ENCODE measurements at regions of chr2 and their contacts with region 1.

Region 1: DNA sequence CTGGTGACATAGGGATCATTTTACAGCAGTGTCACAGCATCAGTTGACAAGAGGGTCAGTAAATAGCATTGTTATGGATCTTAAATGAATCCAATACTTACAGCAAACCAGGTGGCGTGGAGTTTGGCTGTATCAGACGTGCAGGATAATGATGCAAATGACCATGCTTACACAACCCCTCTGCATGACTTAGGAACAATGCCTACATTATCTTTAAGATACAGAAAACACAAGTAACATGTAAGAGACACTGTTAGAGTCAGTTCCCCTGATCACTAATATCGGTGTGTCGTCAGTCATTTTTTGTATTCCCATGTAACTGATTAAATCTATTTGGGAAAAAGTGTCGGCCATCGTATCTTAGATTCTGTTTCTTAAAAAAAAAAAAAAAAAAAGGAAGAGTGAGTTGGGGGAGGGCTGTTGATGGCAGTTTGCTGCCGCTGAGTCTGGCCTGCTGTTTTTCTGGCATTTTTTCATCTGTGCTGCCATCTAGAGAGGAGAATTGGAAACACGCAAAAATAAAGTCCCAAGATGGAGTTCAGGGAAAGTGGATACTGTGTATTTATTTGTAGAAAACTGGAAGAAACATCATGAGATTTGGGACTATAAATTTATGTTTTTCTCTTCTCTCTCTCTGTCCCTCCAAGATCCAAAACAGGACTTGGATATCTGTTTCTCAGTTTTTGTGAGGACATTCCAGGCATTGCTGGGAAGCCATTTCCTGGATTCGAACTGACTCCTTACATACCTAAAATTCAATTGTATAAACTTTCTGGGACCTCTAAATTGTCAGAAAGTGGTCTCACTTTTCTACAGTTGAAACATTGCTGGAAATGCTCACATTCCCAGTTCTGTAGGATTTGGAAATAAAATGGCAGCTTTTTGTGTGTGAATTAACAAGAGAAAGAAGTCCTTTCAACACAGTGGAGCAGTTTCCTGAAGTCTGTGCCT is 60.3 kb upstream of the AGPS start:
- DNase-seq: no peak
- H3K4me3 ChIP-seq: no peak overlapping the region
- H3K27ac ChIP-seq: peak overlapping the region; percentile 56
- H3K4me1 ChIP-seq: peaks cover 5% of the 10 kb centered on the region
- H3K27me3 ChIP-seq: no peaks in the 10 kb centered on the region
- CTCF ChIP-seq: peak in 2 of 3 experiments; percentile 53 to 76
- POLR2A ChIP-seq: no peak

Region 2: GRCh38 chr2:177164584-177165052 is 167.7 kb before region 1 on chr2:
- intact Hi-C with region 1: loop called (anchors 2 kb)
- DNase-seq: peak in 1 of 2 donors; percentile 92
- H3K4me3 ChIP-seq: peak overlapping the region; percentile 24 to 41
- H3K27ac ChIP-seq: peak overlapping the region; percentile 93
- H3K4me1 ChIP-seq: peaks cover 44% of the 10 kb centered on the region
- H3K27me3 ChIP-seq: no peaks in the 10 kb centered on the region
- CTCF ChIP-seq: peak; percentile 92 to 100 (median 99)
- POLR2A ChIP-seq: no peak

Region 3: DNA sequence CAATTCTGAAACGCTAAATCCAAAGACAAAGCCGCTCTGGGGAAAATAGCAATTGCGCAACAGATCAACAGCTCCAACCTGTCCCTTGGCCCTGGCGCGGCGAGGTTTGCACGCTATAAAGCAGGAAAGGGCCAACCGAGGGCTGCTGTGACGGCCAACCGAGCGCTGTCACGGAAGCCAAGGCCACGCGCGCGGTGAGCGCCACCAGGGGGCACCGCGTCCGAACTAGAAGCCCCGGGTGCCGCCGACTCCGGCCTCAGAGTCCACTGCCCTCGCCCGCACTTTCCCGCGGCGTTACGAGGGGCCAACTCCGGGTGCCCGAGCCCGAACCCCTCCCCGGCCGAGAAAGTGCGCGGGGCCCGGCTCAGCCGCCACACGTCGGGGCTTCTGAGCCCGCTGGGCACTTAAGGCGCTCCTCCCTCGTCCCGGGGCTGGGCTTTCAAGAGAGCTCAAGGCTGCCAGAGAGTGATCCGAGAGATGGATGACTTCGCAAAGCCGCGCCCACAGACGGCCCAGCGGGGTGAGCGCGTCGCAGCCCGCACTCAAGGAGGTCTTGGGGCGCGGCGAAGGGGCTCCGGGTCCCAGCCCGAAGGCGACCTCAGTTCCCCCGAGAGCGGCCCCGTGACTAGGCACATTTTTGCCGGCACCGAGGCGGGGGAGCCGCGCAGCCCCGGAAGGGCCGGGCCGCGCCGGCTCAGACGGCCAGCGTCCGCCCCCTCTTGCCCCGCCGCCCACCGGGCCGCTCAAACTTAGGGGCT is 68.7 kb before region 1 on chr2:
- intact Hi-C with region 1: loop called (anchors 5 kb)
- DNase-seq: peak; percentile 98
- H3K4me3 ChIP-seq: peak overlapping the region; percentile 74 to 97
- H3K27ac ChIP-seq: peak overlapping the region; percentile 100
- H3K4me1 ChIP-seq: peaks cover 59% of the 10 kb centered on the region
- H3K27me3 ChIP-seq: no peaks in the 10 kb centered on the region
- CTCF ChIP-seq: peak; percentile 50 to 92 (median 68)
- POLR2A ChIP-seq: peak in 1 of 2 donors; percentile 48

Region 4: DNA sequence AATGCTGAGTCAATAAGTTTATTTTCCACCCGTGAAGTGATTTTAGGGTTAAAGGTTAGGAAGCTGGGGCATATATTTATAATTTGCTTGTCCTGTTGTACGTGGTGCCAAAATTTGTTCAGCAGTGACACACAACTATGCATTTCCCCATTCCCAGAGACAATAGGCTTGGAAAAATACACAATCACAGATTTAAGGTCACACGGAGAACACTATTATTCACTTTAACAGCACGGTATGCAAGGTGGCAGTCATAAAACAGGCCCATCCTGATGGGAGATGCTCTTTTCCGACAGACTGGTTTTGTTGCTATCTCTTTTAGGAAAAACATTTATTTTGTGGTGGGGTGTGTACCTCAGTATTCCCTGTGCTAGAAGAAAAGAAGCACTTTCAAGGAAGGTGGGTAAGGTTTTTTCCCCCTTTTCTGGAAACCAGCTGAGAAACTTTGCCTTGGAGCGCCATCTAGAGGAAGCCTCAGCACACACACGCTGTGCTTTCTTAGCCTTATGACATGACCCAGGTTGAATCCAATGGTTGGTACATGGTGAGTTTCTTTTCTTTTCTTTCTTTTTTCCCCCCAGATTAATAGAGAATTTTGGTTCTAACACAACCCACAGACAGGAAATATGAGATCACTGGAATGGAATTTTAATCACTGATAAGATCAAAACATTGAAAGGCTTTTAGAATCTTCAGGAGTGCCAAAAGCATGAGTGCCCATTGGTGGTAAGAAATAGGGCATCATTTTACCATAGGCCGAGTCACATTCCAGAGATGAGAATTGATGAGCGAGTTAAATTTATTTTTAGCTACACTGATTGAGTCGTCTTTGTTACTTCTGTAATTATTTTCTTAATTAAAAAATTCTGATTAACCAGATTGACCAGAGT is 392.3 kb after region 1 on chr2:
- intact Hi-C with region 1: loop called (anchors 10 kb)
- DNase-seq: no peak
- H3K4me3 ChIP-seq: no peak overlapping the region
- H3K27ac ChIP-seq: no peak overlapping the region
- H3K4me1 ChIP-seq: no peaks in the 10 kb centered on the region
- H3K27me3 ChIP-seq: no peaks in the 10 kb centered on the region
- CTCF ChIP-seq: peak; percentile 42 to 78 (median 69)
- POLR2A ChIP-seq: no peak

Region 5: GRCh38 chr2:177758591-177759371 is 426.5 kb after region 1 on chr2:
- intact Hi-C with region 1: loop called (anchors 10 kb)
- DNase-seq: no peak
- H3K4me3 ChIP-seq: no peak overlapping the region
- H3K27ac ChIP-seq: no peak overlapping the region
- H3K4me1 ChIP-seq: no peaks in the 10 kb centered on the region
- H3K27me3 ChIP-seq: no peaks in the 10 kb centered on the region
- CTCF ChIP-seq: peak in 2 of 3 experiments; percentile 21 to 29
- POLR2A ChIP-seq: no peak

Measured in vagina (tissue), 2 donors.